Common myeloid progenitor, CD34-positive (primary cell): ENCODE measurements at regions of chr1 and their contacts with region 1.

Region 1: DNA sequence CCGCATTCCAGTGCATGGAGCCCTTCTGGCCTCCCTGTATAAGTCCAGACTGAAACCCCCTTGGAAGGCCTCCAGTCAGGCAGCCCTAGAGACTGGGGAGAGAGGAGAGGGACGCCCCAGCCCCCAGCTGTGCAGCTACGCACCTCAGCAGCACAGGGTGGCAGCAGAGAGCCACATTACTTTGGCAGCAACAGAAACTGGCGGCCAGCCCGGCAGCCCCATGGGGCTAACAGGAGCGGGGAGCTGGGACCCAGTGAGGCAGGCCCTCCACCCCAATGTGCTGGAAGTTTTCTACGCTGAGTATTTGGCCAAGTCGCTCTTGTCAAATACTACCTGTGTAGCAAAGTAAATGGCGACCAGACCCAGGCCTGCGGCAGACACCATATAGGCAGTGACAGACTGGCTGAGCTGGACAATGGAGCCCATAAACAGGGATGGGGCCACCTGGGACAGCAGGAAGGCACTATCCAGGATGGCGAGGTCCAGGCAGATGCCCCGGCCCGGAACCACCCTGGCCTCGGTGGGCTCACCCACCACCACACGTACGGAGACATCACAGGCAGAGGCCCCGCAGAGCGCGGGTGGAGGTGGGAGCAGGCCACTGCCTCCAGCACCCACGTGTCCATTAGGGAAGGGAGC is 21.2 kb downstream of the SLC45A3 start:
- DNase-seq: peak; percentile 69 to 81 (median 75)
- H3K4me3 ChIP-seq: no peak overlapping the region
- H3K27ac ChIP-seq: no peak overlapping the region
- H3K4me1 ChIP-seq: peaks cover 0 to 27% (median 23%) of the 10 kb centered on the region in 4 experiments
- H3K27me3 ChIP-seq: no peaks in the 10 kb centered on the region

Region 2: GRCh38 chr1:205543411-205544301 is 115.4 kb before region 1 on chr1:
- CTCF ChIA-PET with region 1: interaction called, 10 read pairs
- POLR2A ChIA-PET with region 1: no interaction called
- DNase-seq: peak; percentile 68 to 91 (median 87)
- H3K4me3 ChIP-seq: peak overlapping the region in 4 of 7 experiments; percentile 19 to 67 (median 42)
- H3K27ac ChIP-seq: no peak overlapping the region
- H3K4me1 ChIP-seq: peaks cover 0 to 10% (median 5%) of the 10 kb centered on the region in 4 experiments
- H3K27me3 ChIP-seq: peaks cover 0 to 31% (median 21%) of the 10 kb centered on the region in 5 experiments

Region 3: DNA sequence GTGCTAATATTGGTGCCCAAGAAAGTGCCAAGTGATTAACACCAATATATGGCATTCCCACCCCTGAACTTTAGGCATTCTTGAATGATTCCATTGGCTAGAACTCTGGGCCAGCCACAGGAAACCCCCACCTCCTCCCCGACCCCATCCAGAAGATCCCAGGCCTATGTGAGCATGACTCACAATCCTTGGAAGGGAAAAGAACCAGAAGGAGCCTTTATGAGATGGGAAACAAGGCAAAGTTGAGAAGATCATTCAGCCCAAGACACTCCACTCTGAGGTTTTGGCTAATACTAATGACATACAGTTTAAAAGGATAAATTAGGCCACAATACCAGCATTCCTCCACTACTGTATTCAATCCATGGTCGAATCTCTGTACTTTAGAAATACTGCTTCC is 49.0 kb before region 1 on chr1:
- CTCF ChIA-PET with region 1: no interaction called
- POLR2A ChIA-PET with region 1: no interaction called
- DNase-seq: no peak
- H3K4me3 ChIP-seq: no peak overlapping the region
- H3K27ac ChIP-seq: no peak overlapping the region
- H3K4me1 ChIP-seq: peaks cover 4 to 16% (median 8%) of the 10 kb centered on the region in 4 experiments
- H3K27me3 ChIP-seq: no peaks in the 10 kb centered on the region

Region 4: GRCh38 chr1:205645519-205645918 is 13.5 kb before region 1 on chr1:
- CTCF ChIA-PET with region 1: interaction called, 59 read pairs
- POLR2A ChIA-PET with region 1: interaction called, 3 read pairs
- DNase-seq: no peak
- H3K4me3 ChIP-seq: no peak overlapping the region
- H3K27ac ChIP-seq: no peak overlapping the region
- H3K4me1 ChIP-seq: no peaks in the 10 kb centered on the region
- H3K27me3 ChIP-seq: no peaks in the 10 kb centered on the region

Region 5: GRCh38 chr1:205711104-205712020 is 52.3 kb after region 1 on chr1:
- CTCF ChIA-PET with region 1: interaction called, 1,013 read pairs
- POLR2A ChIA-PET with region 1: interaction called, 3 read pairs
- DNase-seq: peak; percentile 87 to 92 (median 88)
- H3K4me3 ChIP-seq: no peak overlapping the region
- H3K27ac ChIP-seq: no peak overlapping the region
- H3K4me1 ChIP-seq: peaks cover 26 to 50% (median 34%) of the 10 kb centered on the region in 4 experiments
- H3K27me3 ChIP-seq: no peaks in the 10 kb centered on the region

Region 6: DNA sequence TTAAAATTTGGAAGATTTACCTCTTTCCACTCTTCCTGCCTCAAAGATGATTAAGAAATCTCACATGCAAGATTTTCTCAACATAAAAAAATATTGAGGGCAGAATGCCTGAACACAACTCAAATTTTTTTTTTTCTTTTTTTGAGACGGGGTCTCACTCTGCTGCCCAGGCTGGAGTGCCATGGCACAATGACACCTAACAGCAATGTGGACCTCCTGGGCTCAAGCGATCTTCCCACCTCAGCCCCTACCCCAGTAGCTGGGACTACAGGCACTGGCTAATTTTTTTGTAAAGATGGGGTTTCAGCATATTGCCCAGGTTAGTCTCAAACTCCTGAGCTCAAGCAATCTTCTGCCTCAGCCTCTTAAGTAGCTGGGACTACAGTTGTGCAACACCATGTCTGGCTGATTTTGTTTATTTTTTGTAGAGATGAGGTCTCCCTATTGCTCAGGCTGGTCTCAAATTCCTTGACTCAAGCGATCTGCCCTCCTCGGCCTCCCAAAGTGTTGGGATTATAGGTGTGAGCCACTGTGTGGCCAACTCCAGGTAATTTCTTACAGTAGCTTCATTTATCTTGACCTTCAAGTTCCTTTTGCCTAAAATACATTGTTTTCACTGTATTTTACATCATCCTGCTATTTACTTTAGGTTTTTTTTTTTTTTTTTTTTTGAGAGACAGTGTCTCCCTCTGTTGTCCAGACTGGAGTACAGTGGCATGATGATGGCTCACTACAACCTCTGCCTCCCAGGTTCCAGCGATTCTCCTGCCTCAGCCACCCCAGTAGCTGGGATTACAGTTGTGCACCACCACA is 80.5 kb after region 1 on chr1:
- CTCF ChIA-PET with region 1: interaction called, 32 read pairs
- POLR2A ChIA-PET with region 1: no interaction called
- DNase-seq: peak in 1 of 3 donors; percentile 17
- H3K4me3 ChIP-seq: no peak overlapping the region
- H3K27ac ChIP-seq: no peak overlapping the region
- H3K4me1 ChIP-seq: peaks cover 0 to 12% (median 4%) of the 10 kb centered on the region in 4 experiments
- H3K27me3 ChIP-seq: no peaks in the 10 kb centered on the region

Region 7: GRCh38 chr1:205763980-205764379 is 104.9 kb after region 1 on chr1:
- CTCF ChIA-PET with region 1: no interaction called
- POLR2A ChIA-PET with region 1: no interaction called
- DNase-seq: no peak
- H3K4me3 ChIP-seq: no peak overlapping the region
- H3K27ac ChIP-seq: no peak overlapping the region
- H3K4me1 ChIP-seq: no peaks in the 10 kb centered on the region
- H3K27me3 ChIP-seq: no peaks in the 10 kb centered on the region